ENCODE measurements at regions of chr9 and their contacts with region 1.

Region 1: GRCh38 chr9:2234371-2234893 is 219.3 kb downstream of the SMARCA2 start:
- DNase-seq: peak; percentile 16
- H3K4me3 Mint-ChIP-seq: no peak overlapping the region
- H3K27ac Mint-ChIP-seq: no peak overlapping the region
- H3K4me1 Mint-ChIP-seq: peaks cover 13% of the 10 kb centered on the region
- H3K27me3 Mint-ChIP-seq: no peaks in the 10 kb centered on the region
- CTCF ChIP-seq: no peak

Region 2: DNA sequence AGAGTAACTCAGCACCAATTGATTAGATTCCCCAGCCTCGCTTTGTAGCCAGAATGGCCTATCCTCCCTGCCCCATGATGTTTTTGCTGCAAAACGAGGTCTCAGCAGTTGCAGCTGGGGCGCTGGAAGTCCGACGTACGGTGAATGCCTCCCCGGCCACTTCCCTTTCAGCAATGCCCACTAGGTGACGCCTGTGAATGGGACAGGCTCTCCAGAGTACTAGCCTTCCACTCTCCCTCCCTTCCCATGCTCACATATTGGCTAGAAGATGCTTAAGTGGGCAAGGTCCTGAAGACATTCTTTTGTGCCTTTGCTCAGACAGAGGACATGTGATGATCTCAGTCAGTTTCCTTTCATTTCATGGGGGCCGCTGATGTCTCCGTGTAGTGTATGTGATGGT is 1133.5 kb before region 1 on chr9:
- CTCF ChIA-PET with region 1: no interaction called
- POLR2A ChIA-PET with region 1: no interaction called
- intact Hi-C with region 1: no loop called
- DNase-seq: peak; percentile 59
- H3K4me3 Mint-ChIP-seq: no peak overlapping the region
- H3K27ac Mint-ChIP-seq: no peak overlapping the region
- H3K4me1 Mint-ChIP-seq: peaks cover 6% of the 10 kb centered on the region
- H3K27me3 Mint-ChIP-seq: peaks cover 11% of the 10 kb centered on the region
- CTCF ChIP-seq: peak; percentile 72

Region 3: DNA sequence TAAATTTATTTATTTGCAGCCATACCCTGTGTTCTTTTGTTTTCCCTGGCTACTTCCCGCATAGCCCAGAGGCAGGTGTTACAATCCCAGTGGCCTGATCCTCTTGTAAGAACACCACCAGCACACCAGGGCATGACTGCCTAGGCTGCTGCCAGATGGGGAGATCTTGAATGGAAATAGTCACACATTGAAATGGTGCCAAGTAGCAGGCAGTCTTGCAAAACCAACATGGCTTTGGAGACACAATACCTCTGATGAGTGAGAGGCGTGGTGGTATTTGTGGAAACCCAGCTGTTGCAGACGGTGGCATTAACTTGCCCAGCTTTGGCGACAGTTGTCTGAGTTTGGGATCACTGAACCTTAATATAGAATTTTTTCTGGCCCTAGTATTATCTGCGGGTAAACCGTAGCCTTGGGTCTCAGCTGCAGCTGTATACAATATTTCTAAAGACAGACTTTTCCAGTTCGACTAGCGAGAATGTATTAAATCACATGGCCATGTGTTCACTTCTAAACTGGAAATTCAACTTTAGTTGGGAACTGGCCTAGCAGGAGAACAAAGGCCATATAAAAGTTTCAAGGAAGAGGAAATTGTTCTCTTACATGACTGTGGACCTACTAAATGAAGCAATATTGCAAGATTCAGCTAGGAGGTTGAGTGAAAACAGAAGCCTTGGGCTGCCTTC is 57.7 kb after region 1 on chr9:
- CTCF ChIA-PET with region 1: no interaction called
- POLR2A ChIA-PET with region 1: no interaction called
- intact Hi-C with region 1: loop called (anchors 5 kb)
- DNase-seq: peak; percentile 84
- H3K4me3 Mint-ChIP-seq: no peak overlapping the region
- H3K27ac Mint-ChIP-seq: no peak overlapping the region
- H3K4me1 Mint-ChIP-seq: peaks cover 16% of the 10 kb centered on the region
- H3K27me3 Mint-ChIP-seq: no peaks in the 10 kb centered on the region
- CTCF ChIP-seq: no peak

Region 4: GRCh38 chr9:2307480-2307879 is 73.0 kb after region 1 on chr9:
- CTCF ChIA-PET with region 1: no interaction called
- POLR2A ChIA-PET with region 1: no interaction called
- intact Hi-C with region 1: no loop called
- DNase-seq: no peak
- H3K4me3 Mint-ChIP-seq: no peak overlapping the region
- H3K27ac Mint-ChIP-seq: no peak overlapping the region
- H3K4me1 Mint-ChIP-seq: no peaks in the 10 kb centered on the region
- H3K27me3 Mint-ChIP-seq: no peaks in the 10 kb centered on the region
- CTCF ChIP-seq: no peak

Region 5: DNA sequence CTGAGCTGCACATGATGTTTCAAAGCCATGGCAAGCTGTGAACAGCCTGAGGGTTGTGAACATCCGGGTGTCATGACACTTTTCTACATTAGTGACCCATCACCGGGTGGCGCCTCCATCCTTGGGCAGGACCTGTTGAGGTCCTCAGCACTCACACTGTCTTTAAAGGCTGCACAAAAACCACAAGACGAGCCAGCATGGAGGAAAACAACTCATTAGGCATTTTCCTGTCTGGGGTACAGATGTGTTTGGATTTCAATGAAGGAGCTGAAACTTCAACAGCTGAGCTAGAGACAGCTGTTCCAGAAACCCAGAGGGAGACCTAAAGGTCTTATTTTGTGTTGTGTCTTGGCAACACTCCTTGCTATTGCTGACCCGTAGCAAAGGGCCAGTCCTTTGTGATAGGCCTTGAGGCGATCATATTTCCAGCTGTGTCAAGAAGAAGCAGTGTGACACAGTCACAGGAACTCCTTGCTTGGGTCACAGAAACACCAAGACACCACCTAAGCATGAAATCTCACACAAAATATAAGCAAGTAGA is 235.3 kb after region 1 on chr9:
- CTCF ChIA-PET with region 1: no interaction called
- POLR2A ChIA-PET with region 1: no interaction called
- intact Hi-C with region 1: no loop called
- DNase-seq: peak; percentile 22
- H3K4me3 Mint-ChIP-seq: no peak overlapping the region
- H3K27ac Mint-ChIP-seq: no peak overlapping the region
- H3K4me1 Mint-ChIP-seq: no peaks in the 10 kb centered on the region
- H3K27me3 Mint-ChIP-seq: no peaks in the 10 kb centered on the region
- CTCF ChIP-seq: peak; percentile 13